ENCODE measurements at regions of chr3 and their contacts with region 1.

Region 1: GRCh38 chr3:45167011-45167911 is 21.1 kb upstream of the CDCP1 start:
- DNase-seq: peak; percentile 83
- H3K4me3 Mint-ChIP-seq: peak overlapping the region; percentile 58
- H3K27ac Mint-ChIP-seq: peak overlapping the region; percentile 98
- H3K4me1 Mint-ChIP-seq: peaks cover 51% of the 10 kb centered on the region
- H3K27me3 Mint-ChIP-seq: no peaks in the 10 kb centered on the region

Region 2: DNA sequence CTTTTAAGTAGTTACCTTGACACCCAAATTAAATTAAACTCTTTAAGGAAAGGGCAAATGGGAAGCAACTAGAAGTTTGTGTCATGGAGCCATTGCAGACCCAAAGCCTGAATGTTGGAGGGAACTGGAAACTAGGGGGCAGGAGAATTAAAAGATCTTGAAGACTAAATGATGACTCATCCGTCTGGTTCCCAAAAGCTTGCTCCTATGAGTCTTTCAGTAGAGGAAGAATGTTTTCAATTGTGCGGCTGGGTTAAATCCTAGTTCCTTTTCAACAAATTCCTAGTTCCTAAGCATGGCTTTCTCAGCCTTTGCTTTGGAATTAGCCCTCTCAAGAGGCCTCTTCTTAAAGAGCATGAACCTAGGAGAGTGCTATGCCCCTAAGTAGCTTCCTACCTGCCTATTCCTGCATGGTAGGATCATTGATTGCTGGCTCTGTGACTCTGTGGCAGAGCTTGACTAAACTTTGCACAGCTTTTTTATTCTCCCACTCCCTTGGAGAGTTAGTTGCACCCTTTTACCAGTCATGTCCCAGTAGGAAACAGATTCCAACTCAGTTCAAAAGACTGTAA is 123.4 kb before region 1 on chr3:
- intact Hi-C with region 1: loop called (anchors 2 kb)
- DNase-seq: no peak
- H3K4me3 Mint-ChIP-seq: no peak overlapping the region
- H3K27ac Mint-ChIP-seq: no peak overlapping the region
- H3K4me1 Mint-ChIP-seq: peaks cover 33% of the 10 kb centered on the region
- H3K27me3 Mint-ChIP-seq: peaks cover 16% of the 10 kb centered on the region

Region 3: GRCh38 chr3:45064512-45065372 is 102.5 kb before region 1 on chr3:
- intact Hi-C with region 1: loop called (anchors 1 kb)
- DNase-seq: peak; percentile 69
- H3K4me3 Mint-ChIP-seq: peak overlapping the region; percentile 69
- H3K27ac Mint-ChIP-seq: peak overlapping the region; percentile 96
- H3K4me1 Mint-ChIP-seq: peaks cover 50% of the 10 kb centered on the region
- H3K27me3 Mint-ChIP-seq: peaks cover 3% of the 10 kb centered on the region

Region 4: DNA sequence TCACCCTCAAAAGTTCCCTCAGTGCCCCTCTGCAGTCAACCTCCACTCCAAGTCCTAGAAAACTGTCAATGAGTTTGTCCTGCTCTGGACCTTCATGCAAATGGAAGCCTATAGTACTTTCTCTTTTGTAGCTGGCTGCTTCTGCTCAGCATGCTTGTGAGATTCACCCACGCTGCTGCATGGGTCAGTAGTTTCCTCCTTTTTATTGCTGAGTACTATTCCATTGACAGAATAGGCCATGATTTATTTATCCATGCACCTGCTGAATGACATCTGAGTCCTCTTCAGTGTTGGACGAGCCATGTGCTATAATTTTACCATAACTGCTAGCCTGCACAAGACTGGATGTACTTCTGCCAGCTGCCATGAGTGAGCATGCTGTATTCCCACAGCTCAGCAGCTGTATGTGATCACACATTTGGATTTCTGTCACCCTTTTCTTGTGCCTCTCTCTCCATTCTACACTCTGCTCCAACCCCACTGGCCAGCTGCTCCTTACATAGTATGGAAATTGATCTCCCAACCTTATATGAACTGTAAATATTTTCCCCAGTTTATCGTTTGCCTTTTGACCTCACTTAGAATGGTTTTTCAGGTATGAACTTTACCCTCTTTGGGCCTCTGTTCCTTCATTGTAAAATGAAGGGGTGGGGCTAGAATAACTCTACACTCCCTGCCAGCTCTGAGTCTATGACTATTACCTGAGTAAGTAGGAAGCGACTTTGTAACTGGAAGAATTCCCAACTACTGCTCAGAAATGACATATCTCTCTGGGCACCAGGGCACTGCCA is 47.2 kb before region 1 on chr3:
- intact Hi-C with region 1: loop called (anchors 2 kb)
- DNase-seq: no peak
- H3K4me3 Mint-ChIP-seq: no peak overlapping the region
- H3K27ac Mint-ChIP-seq: peak overlapping the region; percentile 18
- H3K4me1 Mint-ChIP-seq: peaks cover 65% of the 10 kb centered on the region
- H3K27me3 Mint-ChIP-seq: no peaks in the 10 kb centered on the region

Region 5: DNA sequence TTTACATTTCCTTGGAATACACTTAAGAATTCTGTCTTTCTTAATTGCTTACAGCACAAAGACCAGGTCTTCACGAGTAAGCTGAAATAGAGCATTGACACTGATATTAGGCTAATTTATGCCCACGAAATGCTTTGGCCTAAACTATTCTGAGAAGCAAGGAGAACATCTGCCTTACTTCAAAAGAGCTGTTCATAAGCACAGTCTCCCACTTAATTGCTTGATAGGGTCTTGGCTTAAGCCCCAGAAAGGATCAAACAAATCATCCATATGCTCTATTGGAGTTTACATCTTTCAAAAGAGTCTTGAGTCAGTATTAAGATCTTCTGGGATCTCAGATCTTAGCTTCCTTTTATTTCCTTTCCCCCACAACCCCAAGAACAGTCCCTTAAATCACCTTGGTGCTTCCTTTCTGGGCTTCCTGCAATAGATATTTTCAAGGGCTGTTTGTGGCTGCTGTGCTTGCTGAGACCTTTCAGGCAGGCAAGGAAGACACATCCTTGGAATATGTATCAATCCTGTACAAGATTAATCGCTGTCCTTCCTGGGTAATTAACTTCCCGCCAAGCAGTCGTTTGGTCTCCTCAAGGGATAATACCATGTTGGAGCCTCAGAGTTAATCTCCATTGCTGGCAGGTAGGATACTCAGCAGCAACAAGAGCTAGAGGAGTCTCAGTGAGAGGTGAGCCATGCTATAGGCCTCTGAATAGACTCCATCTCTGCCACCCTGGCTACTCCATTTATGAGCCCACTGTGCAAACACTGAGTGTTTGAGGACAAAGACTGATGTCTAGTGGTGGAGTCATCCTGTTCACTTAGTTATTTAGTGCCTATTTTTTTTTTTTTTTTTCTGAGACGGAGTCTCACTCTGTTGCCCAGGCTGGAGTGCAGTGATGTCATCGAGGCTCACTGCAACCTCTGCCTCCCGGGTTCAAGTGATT is 21.7 kb after region 1 on chr3:
- intact Hi-C with region 1: loop called (anchors 1 kb)
- DNase-seq: no peak
- H3K4me3 Mint-ChIP-seq: no peak overlapping the region
- H3K27ac Mint-ChIP-seq: no peak overlapping the region
- H3K4me1 Mint-ChIP-seq: peaks cover 46% of the 10 kb centered on the region
- H3K27me3 Mint-ChIP-seq: peaks cover 2% of the 10 kb centered on the region

Region 6: DNA sequence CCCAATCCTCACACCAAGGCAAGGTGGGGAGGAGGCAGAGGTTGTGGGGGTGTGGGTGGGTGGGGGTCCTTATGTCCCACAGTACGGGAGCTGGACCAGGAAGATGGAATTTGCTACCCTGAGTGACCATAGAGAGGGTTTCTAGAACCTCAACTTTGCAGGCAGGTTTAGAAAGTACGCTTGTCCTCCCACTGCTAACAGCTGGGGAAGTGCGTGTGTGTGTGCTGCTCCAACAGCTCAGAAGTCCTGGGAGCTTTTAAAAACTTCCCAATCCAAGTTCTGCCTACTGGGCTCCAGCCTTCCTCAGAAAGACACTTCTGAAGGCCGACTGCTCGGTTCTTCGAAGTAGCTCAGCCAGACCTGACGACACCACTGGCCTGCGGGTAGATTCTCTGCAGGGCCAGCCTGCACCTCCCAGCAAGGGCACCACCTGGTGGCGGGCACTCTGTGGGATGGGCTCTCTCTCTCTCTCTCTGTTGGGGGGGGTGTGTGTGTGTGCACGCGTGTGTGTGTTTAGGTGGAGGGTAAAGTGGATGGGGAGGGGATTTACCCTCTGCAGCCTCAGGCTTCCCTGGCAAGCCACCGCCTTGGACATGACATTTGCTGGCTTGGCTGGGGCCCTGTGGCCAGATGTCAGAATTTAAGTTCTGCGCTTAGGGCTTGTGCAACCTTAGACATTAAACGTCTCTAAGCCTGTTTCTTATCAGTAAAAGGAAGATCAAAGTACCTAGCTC is 43.2 kb after region 1 on chr3:
- intact Hi-C with region 1: loop called (anchors 1 kb)
- DNase-seq: peak; percentile 69
- H3K4me3 Mint-ChIP-seq: no peak overlapping the region
- H3K27ac Mint-ChIP-seq: no peak overlapping the region
- H3K4me1 Mint-ChIP-seq: peaks cover 31% of the 10 kb centered on the region
- H3K27me3 Mint-ChIP-seq: peaks cover 11% of the 10 kb centered on the region

Measured in activated T-helper 2 cell treated with anti-CD3 and anti-CD28 coated beads, Interferon-gamma antibody, Interleukin-2, Interleukin-4, amounts not matched to agents 10 μg/mL and 5 μg/mL and 100 μg/mL, durations not matched to agents 14 hours and 24 hours and 36 hours (primary cell).